ENCODE measurements at regions of chr3 and their contacts with region 1.

Region 1: DNA sequence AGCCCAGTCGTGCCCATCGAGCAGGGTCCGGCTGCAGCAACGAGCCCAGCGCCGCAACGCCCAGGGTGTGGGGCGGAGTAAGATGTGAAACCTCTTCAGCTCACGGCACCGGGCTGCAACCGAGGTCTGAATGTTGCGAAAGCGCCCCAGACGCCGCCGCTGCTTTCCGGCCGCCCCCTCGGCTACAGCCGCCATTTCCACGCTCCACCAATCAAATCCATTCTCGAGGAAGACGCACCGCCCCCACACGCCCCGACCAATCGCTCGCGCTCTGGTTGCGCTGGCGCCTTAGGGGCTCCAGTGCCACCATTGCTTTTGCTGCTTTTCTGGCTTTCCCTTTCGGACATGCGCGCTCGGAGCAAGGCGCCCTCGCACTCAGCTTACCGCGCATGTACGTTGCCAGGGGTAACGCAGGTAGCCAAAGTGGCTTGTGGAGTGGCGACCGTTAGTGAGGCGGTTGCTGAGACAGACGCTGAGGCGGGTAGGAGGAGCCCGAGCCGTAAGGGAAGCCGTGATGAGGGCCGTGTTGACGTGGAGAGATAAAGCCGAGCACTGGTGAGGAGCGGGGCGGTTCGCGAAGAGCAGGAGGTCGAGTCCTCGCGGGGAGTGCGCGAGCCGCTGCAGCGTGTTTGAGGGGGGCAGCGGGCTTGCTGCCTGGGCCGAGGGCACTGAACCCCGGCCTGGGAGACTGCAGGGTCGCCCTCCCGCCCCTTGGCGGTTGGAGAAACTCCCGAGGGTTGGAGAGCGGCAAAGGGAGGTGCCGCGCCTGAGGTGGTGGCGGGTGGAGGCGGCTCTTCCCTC is at the starts of genes IFT122 and MBD4:
- DNase-seq: peak; percentile 99
- H3K4me3 Mint-ChIP-seq: peak within 1 kb of the TSS; percentile 87
- H3K27ac Mint-ChIP-seq: peak within 1 kb of the TSS; percentile 89
- H3K4me1 Mint-ChIP-seq: peaks cover 71% of the 10 kb centered on the region
- H3K27me3 Mint-ChIP-seq: no peaks in the 10 kb centered on the region
- total RNA-seq, gene IFT122: 21.5 to 25.5 TPM
- total RNA-seq, gene MBD4: 50.5 to 53.7 TPM

Region 2: GRCh38 chr3:129183569-129184395 is 256.2 kb before region 1 on chr3 and contains the start of gene CNBP:
- CTCF ChIA-PET with region 1: no interaction called
- POLR2A ChIA-PET with region 1: interaction called, 4 read pairs
- intact Hi-C with region 1: loop called (anchors 5 kb)
- DNase-seq: peak; percentile 95
- H3K4me3 Mint-ChIP-seq: peak within 1 kb of the TSS; percentile 97
- H3K27ac Mint-ChIP-seq: peak within 1 kb of the TSS; percentile 96
- H3K4me1 Mint-ChIP-seq: peaks cover 27% of the 10 kb centered on the region
- H3K27me3 Mint-ChIP-seq: no peaks in the 10 kb centered on the region
- total RNA-seq, gene CNBP: 342 to 348 TPM

Region 3: DNA sequence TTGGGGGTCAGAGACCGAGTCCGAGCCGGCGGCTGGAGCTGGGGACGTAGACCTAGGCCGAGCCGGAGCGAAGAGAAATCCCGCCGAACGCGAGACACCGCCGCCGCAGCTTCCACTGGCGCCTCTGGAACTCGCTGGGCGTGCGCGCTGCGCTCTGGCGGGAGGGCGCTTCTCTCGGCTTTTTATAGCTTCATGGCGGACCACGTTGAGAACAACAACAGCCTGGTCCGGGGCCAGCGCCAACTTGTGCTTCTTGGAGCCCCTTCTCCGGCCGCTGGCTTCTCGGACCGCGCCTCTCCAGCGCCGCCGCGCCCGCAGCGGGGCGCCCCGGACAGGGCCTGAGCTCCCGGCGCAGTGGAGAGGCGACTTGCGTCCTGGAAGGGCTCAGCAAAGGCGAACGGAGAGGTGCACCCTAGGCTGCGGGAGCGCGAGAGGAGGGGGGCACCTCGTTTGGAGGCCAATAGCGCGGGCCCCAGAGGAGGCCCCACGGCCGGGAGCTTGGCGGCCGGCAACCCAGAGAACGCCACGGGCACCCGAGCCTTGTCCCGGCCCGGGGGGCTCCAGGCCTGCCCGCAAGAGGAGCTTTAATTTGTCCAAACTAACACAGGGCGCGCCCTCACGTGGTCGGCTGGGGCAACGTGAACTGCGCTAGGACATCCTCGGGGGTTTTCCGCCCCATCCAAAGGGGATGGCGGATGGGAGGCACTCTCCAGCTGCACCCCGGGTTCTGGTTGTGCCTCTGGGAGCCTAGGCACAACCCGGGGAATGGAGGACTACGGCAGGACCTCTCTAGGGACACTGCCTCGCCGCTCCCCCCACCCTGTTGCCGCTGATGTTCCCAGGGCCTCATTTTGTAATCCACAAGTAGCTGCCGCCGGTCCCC is 123.6 kb before region 1 on chr3:
- CTCF ChIA-PET with region 1: interaction called, 8 read pairs
- POLR2A ChIA-PET with region 1: interaction called, 8 read pairs
- intact Hi-C with region 1: loop called (anchors 1 kb)
- DNase-seq: peak; percentile 90
- H3K4me3 Mint-ChIP-seq: peak overlapping the region; percentile 93
- H3K27ac Mint-ChIP-seq: peak overlapping the region; percentile 89
- H3K4me1 Mint-ChIP-seq: peaks cover 26% of the 10 kb centered on the region
- H3K27me3 Mint-ChIP-seq: no peaks in the 10 kb centered on the region

Region 4: DNA sequence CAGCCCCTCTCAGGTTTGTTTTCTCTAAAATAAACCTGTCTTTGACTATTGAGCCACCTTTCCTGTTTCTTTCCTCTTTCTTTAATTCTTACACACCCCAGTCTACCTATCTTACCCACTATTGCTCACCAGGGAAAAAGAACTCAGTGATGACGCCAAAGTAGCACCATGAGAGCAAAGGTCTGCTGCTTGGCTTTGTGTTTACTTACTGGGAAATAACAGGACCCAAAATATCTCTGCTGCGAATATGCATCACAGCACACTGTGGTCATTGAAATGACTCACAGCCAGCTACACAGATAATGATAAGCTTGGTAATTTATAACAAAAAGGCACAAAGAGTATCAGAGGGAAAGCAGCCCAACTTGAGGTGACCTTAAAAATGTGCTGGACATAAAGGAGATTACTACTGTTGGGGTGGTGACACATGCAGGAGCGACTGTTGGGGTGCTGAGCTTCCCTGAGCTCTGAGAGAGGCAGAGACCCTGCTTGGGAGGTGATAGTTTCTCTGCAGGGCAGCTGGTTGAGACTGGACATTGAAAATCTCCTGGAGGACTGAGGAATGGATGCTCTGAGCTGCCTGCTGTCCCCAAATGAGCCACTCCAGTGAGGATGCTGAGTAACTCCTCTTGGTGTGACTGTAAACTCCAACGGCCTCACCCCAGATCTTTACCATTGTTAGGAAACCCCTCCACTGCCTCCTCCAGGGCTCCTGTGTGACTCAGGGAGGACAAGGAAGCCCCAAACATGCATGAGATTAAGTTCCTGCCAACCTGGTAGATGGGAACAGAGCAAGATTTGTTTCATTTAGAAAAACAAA is 26.1 kb before region 1 on chr3:
- CTCF ChIA-PET with region 1: no interaction called
- POLR2A ChIA-PET with region 1: no interaction called
- intact Hi-C with region 1: no loop called
- DNase-seq: no peak
- H3K4me3 Mint-ChIP-seq: no peak overlapping the region
- H3K27ac Mint-ChIP-seq: no peak overlapping the region
- H3K4me1 Mint-ChIP-seq: no peaks in the 10 kb centered on the region
- H3K27me3 Mint-ChIP-seq: no peaks in the 10 kb centered on the region

Region 5: GRCh38 chr3:129428376-129429079 is 11.5 kb before region 1 on chr3 and contains the start of gene EFCAB12:
- CTCF ChIA-PET with region 1: interaction called, 4 read pairs
- POLR2A ChIA-PET with region 1: interaction called, 30 read pairs
- intact Hi-C with region 1: loop called (anchors 1 kb)
- DNase-seq: peak; percentile 94
- H3K4me3 Mint-ChIP-seq: peak within 1 kb of the TSS; percentile 59
- H3K27ac Mint-ChIP-seq: peak within 1 kb of the TSS; percentile 72
- H3K4me1 Mint-ChIP-seq: peaks cover 38% of the 10 kb centered on the region
- H3K27me3 Mint-ChIP-seq: no peaks in the 10 kb centered on the region
- total RNA-seq, gene EFCAB12: 0.31 to 0.45 TPM

Region 6: DNA sequence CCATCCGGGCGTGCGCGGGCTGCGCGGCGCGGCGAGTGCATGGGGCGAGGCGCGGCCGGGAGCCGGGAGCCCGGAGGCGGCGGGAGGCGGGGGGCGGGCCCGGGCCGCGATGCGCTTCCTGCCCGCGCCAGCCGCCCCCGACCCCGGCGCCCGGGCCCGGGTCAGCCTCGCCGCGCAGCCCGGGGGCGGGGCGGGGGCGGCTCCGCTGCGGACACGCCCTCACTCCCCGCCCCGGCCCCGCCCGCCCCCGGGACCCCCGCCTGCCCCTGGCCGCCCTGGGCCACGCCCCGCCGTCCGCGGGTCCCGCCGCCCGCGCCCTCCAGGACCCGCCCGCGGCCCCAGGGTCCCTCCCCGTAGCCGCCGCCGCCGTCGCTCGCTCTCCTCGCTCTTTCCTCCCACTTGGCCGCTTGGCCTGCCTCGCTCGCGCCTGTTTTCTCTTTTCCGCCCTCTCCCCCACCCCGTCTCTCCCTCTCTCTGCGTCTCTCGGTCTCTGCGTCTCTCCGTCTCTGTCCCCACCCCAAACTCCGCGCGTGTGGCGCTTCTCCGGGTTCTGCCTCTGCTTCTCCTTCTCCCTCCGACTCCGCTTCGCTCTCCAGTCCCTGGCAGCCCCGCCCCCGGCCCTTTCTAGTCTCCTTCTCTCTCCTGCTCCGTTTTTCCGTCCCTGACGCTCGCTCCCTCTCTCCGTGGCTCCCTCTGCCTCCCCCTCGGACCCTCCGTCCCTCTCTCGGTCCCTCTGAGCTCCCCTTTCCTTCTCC is 166.8 kb after region 1 on chr3 and contains the start of gene PLXND1:
- CTCF ChIA-PET with region 1: no interaction called
- POLR2A ChIA-PET with region 1: no interaction called
- intact Hi-C with region 1: loop called (anchors 5 kb)
- DNase-seq: peak; percentile 46
- H3K4me3 Mint-ChIP-seq: peak within 1 kb of the TSS; percentile 76
- H3K27ac Mint-ChIP-seq: no peak within 1 kb of the TSS
- H3K4me1 Mint-ChIP-seq: peaks cover 12% of the 10 kb centered on the region
- H3K27me3 Mint-ChIP-seq: peaks cover 14% of the 10 kb centered on the region
- total RNA-seq, gene PLXND1: 7.2 to 8.6 TPM

Region 7: GRCh38 chr3:129893581-129894070 is 453.6 kb after region 1 on chr3 and contains the start of gene TMCC1:
- CTCF ChIA-PET with region 1: no interaction called
- POLR2A ChIA-PET with region 1: no interaction called
- intact Hi-C with region 1: loop called (anchors 1 kb)
- DNase-seq: peak; percentile 89
- H3K4me3 Mint-ChIP-seq: peak within 1 kb of the TSS; percentile 88
- H3K27ac Mint-ChIP-seq: peak within 1 kb of the TSS; percentile 82
- H3K4me1 Mint-ChIP-seq: peaks cover 35% of the 10 kb centered on the region
- H3K27me3 Mint-ChIP-seq: no peaks in the 10 kb centered on the region
- total RNA-seq, gene TMCC1: 20.6 to 20.8 TPM

Measured in activated CD4-positive, alpha-beta memory T cell treated with anti-CD3 and anti-CD28 coated beads for 36 hours (primary cell).